ENCODE measurements at regions of chr2 and their contacts with region 1.

Region 1: GRCh38 chr2:205925373-205926337 is 160.3 kb downstream of the INO80D start:
- DNase-seq: peak; percentile 66
- ATAC-seq: peak; percentile 53
- H3K4me3 ChIP-seq: no peak overlapping the region
- H3K4me3 Mint-ChIP-seq: no peak overlapping the region
- H3K27ac ChIP-seq: no peak overlapping the region
- H3K27ac Mint-ChIP-seq: no peak overlapping the region
- H3K4me1 ChIP-seq: peaks cover 6 to 7% of the 10 kb centered on the region in 2 donors
- H3K4me1 Mint-ChIP-seq: peaks cover 6% of the 10 kb centered on the region
- H3K27me3 ChIP-seq: peaks cover 0 to 23% (median 14%) of the 10 kb centered on the region in 4 experiments
- H3K27me3 Mint-ChIP-seq: peaks cover 44% of the 10 kb centered on the region
- CTCF ChIP-seq: peak; percentile 76

Region 2: GRCh38 chr2:204145263-204145751 is 1780.3 kb before region 1 on chr2:
- CTCF ChIA-PET with region 1: interaction called, 3 read pairs
- POLR2A ChIA-PET with region 1: no interaction called
- intact Hi-C with region 1: loop called (anchors 1 kb)
- DNase-seq: peak; percentile 68
- ATAC-seq: peak; percentile 60
- H3K4me3 ChIP-seq: peak overlapping the region; percentile 17 to 51 (median 42)
- H3K4me3 Mint-ChIP-seq: peak overlapping the region; percentile 80
- H3K27ac ChIP-seq: no peak overlapping the region
- H3K27ac Mint-ChIP-seq: no peak overlapping the region
- H3K4me1 ChIP-seq: peaks cover 0 to 5% of the 10 kb centered on the region in 2 donors
- H3K4me1 Mint-ChIP-seq: peaks cover 10% of the 10 kb centered on the region
- H3K27me3 ChIP-seq: peaks cover 0 to 8% (median 3%) of the 10 kb centered on the region in 4 experiments
- H3K27me3 Mint-ChIP-seq: peaks cover 28% of the 10 kb centered on the region
- CTCF ChIP-seq: peak; percentile 92

Region 3: GRCh38 chr2:205596581-205596980 is 329.1 kb before region 1 on chr2:
- CTCF ChIA-PET with region 1: no interaction called
- POLR2A ChIA-PET with region 1: no interaction called
- intact Hi-C with region 1: loop called (anchors 2 kb)
- DNase-seq: no peak
- ATAC-seq: no peak
- H3K4me3 ChIP-seq: no peak overlapping the region
- H3K4me3 Mint-ChIP-seq: no peak overlapping the region
- H3K27ac ChIP-seq: no peak overlapping the region
- H3K27ac Mint-ChIP-seq: no peak overlapping the region
- H3K4me1 ChIP-seq: no peaks in the 10 kb centered on the region
- H3K4me1 Mint-ChIP-seq: no peaks in the 10 kb centered on the region
- H3K27me3 ChIP-seq: no peaks in the 10 kb centered on the region
- H3K27me3 Mint-ChIP-seq: peaks cover 5% of the 10 kb centered on the region
- CTCF ChIP-seq: no peak

Region 4: DNA sequence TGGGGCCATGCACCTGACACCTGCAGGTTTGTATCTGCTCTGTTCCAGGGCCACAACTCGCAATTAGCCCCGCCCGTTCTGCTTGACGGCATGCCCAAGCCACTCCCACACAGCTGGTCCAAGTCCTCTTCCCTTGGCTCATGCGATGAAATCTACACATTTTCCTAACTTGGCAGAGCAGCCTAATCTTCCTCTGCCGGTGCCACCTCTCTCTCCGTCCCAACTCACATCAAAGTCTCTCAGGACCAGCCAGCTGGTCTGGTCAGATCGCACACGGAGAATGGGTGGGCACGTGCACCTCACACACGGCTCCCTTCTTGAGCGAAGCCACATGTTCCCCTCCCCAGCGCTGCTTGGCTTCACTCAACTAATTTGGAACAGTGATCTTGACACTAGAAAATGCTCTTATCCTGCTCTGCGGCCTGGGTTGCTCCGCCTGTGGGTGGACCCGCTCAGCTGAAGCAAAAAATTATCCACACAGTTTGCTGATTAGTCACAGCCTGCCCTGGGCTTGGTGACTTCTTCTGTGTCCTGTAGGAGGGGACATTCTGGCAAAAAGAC is 66.7 kb before region 1 on chr2:
- CTCF ChIA-PET with region 1: no interaction called
- POLR2A ChIA-PET with region 1: no interaction called
- intact Hi-C with region 1: no loop called
- DNase-seq: no peak
- ATAC-seq: no peak
- H3K4me3 ChIP-seq: no peak overlapping the region
- H3K4me3 Mint-ChIP-seq: no peak overlapping the region
- H3K27ac ChIP-seq: no peak overlapping the region
- H3K27ac Mint-ChIP-seq: no peak overlapping the region
- H3K4me1 ChIP-seq: no peaks in the 10 kb centered on the region
- H3K4me1 Mint-ChIP-seq: peaks cover 8% of the 10 kb centered on the region
- H3K27me3 ChIP-seq: no peaks in the 10 kb centered on the region
- H3K27me3 Mint-ChIP-seq: peaks cover 16% of the 10 kb centered on the region
- CTCF ChIP-seq: no peak